ENCODE measurements at regions of chr13 and their contacts with region 1.

Region 1: GRCh38 chr13:72255908-72256307 is 388.9 kb upstream of the DACH1 start:
- DNase-seq: peak; percentile 70
- ATAC-seq: peak; percentile 84
- H3K4me3 ChIP-seq: no peak overlapping the region
- H3K27ac ChIP-seq: no peak overlapping the region
- H3K4me1 ChIP-seq: peaks cover 22% of the 10 kb centered on the region
- H3K27me3 ChIP-seq: no peaks in the 10 kb centered on the region
- CTCF ChIP-seq: peak; percentile 79

Region 2: GRCh38 chr13:71320452-71320851 is 935.5 kb before region 1 on chr13:
- CTCF ChIA-PET with region 1: no interaction called
- POLR2A ChIA-PET with region 1: no interaction called
- intact Hi-C with region 1: loop called (anchors 5 kb)
- DNase-seq: peak; percentile 38
- ATAC-seq: no peak
- H3K4me3 ChIP-seq: no peak overlapping the region
- H3K27ac ChIP-seq: no peak overlapping the region
- H3K4me1 ChIP-seq: no peaks in the 10 kb centered on the region
- H3K27me3 ChIP-seq: 0 out of 2 replicates have a peak, but pooled peaks cover 2% of the 10 kb centered on the region
- CTCF ChIP-seq: peak; percentile 56

Region 3: DNA sequence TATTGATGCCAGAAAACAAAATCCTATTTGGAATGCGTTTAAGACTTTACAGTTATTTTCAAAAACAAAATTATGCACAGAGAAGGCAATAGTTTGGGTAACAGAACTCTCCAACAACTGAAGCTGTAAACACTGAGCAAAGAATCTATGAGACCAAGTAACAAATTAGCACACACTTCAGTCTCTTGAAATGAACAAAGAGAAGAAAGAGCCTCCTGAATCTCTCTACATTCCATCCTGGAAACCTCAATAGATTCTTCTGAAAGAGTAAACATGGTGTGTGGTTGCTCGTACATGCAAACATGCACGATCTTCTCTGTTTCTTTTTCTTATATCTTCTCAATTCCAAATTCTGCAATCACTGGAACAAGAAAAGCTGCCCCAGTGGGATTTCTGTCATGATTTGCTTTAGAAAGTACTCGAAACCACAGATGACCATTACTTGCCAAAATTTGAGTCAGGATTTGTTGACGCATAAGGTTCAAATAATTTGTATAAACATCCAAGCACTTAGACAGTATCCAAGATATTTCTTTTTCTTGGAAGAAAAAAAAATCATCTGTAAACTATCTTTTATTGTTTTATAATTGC is 251.0 kb before region 1 on chr13:
- CTCF ChIA-PET with region 1: no interaction called
- POLR2A ChIA-PET with region 1: no interaction called
- intact Hi-C with region 1: loop called (anchors 10 kb)
- DNase-seq: peak; percentile 71
- ATAC-seq: peak; percentile 65
- H3K4me3 ChIP-seq: peak overlapping the region; percentile 14; the same call in 1 of the 2 replicates
- H3K27ac ChIP-seq: peak overlapping the region; percentile 49
- H3K4me1 ChIP-seq: peaks cover 15% of the 10 kb centered on the region
- H3K27me3 ChIP-seq: no peaks in the 10 kb centered on the region
- CTCF ChIP-seq: no peak

Region 4: GRCh38 chr13:72194556-72194955 is 61.4 kb before region 1 on chr13:
- CTCF ChIA-PET with region 1: no interaction called
- POLR2A ChIA-PET with region 1: no interaction called
- intact Hi-C with region 1: loop called (anchors 2 kb)
- DNase-seq: peak; percentile 61
- ATAC-seq: peak; percentile 85
- H3K4me3 ChIP-seq: peak overlapping the region; percentile 47; the same call in 1 of the 2 replicates
- H3K27ac ChIP-seq: peak overlapping the region; percentile 81
- H3K4me1 ChIP-seq: peaks cover 18% of the 10 kb centered on the region
- H3K27me3 ChIP-seq: no peaks in the 10 kb centered on the region
- CTCF ChIP-seq: no peak

Region 5: DNA sequence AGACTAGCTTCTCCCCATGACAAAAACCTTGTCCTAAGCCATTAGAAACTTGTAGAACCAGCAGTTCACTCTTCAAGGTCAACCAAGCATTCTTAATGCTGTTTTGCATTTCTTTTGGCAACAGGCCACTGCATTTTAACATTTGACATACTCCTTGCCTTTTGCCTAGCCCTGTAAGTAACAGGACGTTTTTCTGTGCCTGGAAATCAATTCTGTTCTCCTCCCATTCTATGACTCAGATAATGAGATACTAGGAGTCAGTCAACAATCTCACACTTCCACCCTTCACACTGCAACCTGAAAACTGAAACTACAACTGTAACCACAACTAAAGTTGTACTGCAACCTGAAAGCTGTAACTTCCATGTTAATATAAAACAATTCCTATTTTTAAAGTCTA is 202.8 kb after region 1 on chr13:
- CTCF ChIA-PET with region 1: no interaction called
- POLR2A ChIA-PET with region 1: no interaction called
- intact Hi-C with region 1: no loop called
- DNase-seq: peak; percentile 27
- ATAC-seq: peak; percentile 73
- H3K4me3 ChIP-seq: no peak overlapping the region
- H3K27ac ChIP-seq: no peak overlapping the region
- H3K4me1 ChIP-seq: no peaks in the 10 kb centered on the region
- H3K27me3 ChIP-seq: no peaks in the 10 kb centered on the region
- CTCF ChIP-seq: no peak

Region 6: GRCh38 chr13:72696579-72696978 is 440.7 kb after region 1 on chr13:
- CTCF ChIA-PET with region 1: no interaction called
- POLR2A ChIA-PET with region 1: no interaction called
- intact Hi-C with region 1: loop called (anchors 5 kb)
- DNase-seq: peak; percentile 46
- ATAC-seq: no peak
- H3K4me3 ChIP-seq: no peak overlapping the region
- H3K27ac ChIP-seq: no peak overlapping the region
- H3K4me1 ChIP-seq: no peaks in the 10 kb centered on the region
- H3K27me3 ChIP-seq: no peaks in the 10 kb centered on the region
- CTCF ChIP-seq: peak; percentile 59

Region 7: DNA sequence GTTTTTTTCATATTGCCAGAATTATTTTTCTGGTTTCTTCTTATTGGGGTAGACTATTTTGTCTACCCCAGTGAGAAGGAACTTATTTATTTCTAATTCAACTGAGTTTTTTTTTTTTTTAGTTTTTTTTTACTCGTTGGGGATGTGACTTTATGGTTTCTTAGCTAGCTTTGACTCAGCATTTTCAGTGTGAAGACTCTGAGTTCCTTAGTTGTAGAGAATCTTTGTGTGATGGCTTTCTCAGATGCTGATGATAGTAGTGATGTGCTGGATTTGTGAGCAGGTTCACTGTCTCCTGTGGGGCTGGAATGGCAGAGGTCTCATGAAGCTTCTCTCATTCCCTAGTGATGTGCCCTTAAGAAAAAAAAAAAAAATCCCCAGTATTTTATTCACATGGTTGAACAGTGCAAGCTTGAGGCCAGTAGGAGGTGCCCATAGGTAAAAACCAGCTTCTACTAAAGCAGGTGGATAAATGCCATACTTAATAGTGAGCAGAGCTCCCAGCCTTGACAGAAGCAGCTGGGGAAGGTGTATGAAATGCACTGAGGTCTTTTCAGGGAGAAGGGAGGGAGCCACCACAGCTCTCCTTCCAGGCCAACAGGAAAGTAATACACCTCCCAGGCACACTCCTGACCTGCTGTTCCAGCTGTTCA is 696.7 kb after region 1 on chr13:
- CTCF ChIA-PET with region 1: no interaction called
- POLR2A ChIA-PET with region 1: no interaction called
- intact Hi-C with region 1: no loop called
- DNase-seq: peak; percentile 19
- ATAC-seq: no peak; the same call in 1 of the 2 replicates
- H3K4me3 ChIP-seq: no peak overlapping the region
- H3K27ac ChIP-seq: no peak overlapping the region
- H3K4me1 ChIP-seq: no peaks in the 10 kb centered on the region
- H3K27me3 ChIP-seq: no peaks in the 10 kb centered on the region
- CTCF ChIP-seq: peak; percentile 40; the same call in 1 of the 2 replicates

Measured in PC-3 (cell line).